Vagina (tissue), 2 donors: ENCODE measurements at regions of chr1 and their contacts with region 1.

Region 1: DNA sequence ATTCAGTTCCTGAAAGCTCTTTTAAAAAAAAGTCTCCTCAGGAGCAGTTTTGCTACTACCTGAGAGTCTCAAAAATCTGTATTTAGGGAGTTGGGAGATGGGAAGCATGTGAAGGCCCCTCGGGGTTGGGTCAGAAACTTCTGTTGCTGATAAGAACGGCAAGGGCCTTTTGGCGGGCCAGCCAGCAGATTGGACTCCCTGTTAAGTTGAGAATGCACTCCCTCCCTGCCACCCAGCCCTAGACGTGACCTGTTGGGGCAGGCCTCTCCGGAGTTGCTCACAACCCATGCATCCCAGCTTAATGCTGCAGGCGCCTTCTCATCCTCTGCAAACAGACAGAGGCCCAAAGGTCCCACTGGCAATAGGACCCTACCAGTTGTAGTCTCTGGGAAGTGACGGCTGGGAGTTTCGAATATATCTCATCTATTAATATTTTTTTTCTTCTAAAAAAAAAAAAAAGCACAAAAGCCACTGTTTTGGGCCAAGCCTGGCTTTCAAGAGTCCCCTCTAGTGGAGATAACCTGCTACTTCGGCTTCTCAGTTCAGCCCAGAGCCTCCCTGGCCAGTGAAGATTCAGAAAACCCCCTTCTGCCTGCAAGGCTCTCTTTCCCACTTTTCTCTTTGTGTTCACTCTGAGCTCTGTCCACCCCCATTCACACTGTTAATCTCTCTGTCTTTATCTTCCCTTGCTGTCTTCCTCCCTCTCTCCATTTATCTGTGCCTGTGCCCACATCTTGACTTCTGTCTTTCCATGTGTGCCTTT is 5.3 kb downstream of the PLXNA2 start:
- DNase-seq: no peak
- H3K4me3 ChIP-seq: no peak overlapping the region
- H3K27ac ChIP-seq: no peak overlapping the region
- H3K4me1 ChIP-seq: peaks cover 81% of the 10 kb centered on the region
- H3K27me3 ChIP-seq: no peaks in the 10 kb centered on the region
- CTCF ChIP-seq: peak in 2 of 3 experiments; percentile 54 to 61
- POLR2A ChIP-seq: no peak

Region 2: GRCh38 chr1:207885129-207886032 is 353.5 kb before region 1 on chr1:
- intact Hi-C with region 1: loop called (anchors 10 kb)
- DNase-seq: peak in 1 of 2 donors; percentile 86
- H3K4me3 ChIP-seq: no peak overlapping the region
- H3K27ac ChIP-seq: peak overlapping the region; percentile 85
- H3K4me1 ChIP-seq: peaks cover 58% of the 10 kb centered on the region
- H3K27me3 ChIP-seq: no peaks in the 10 kb centered on the region
- CTCF ChIP-seq: peak; percentile 83 to 98 (median 93)
- POLR2A ChIP-seq: no peak

Region 3: DNA sequence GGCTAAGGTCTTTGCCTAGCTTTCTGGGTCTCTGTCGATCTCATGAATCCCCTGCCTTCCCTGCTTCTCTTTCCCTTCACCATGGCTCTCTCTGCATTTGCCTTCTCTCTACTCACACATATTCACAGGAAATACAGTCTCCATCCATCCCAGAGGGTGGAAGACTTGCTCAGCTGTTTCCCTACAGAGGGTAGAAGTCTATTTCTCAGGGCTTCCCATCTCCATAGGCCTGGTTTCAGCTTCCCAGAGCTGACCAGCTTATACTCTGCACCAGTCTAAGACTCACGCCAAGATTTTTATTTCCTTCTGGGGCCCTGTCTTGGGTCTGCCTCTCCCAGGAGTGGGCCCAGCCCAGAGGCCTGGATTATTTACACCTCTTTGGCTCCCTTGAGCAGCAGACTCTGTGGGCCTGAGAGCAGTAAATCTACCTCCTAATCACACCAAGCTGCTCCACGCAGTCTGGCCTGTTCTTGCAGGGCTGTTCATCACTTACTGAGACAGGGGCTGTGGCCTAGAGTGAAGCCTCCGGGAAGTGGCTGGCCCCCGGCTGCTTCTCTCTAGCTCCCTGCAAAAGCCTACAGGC is 97.2 kb before region 1 on chr1:
- intact Hi-C with region 1: loop called (anchors 5 kb)
- DNase-seq: no peak
- H3K4me3 ChIP-seq: no peak overlapping the region
- H3K27ac ChIP-seq: peak overlapping the region; percentile 61
- H3K4me1 ChIP-seq: peaks cover 30% of the 10 kb centered on the region
- H3K27me3 ChIP-seq: no peaks in the 10 kb centered on the region
- CTCF ChIP-seq: no peak
- POLR2A ChIP-seq: no peak